ENCODE measurements at regions of chr19 and their contacts with region 1.

Region 1: GRCh38 chr19:53254411-53255341 is at the start of gene ZNF677:
- DNase-seq: peak; percentile 89 to 97 (median 94)
- H3K4me3 ChIP-seq: peak within 1 kb of the TSS; percentile 62 to 97 (median 85)
- H3K27ac ChIP-seq: peak within 1 kb of the TSS in 47 of 59 donors; percentile 2 to 88 (median 74)
- H3K27me3 ChIP-seq: peaks cover 0 to 5% (median 0%) of the 10 kb centered on the region in 45 donors
- CTCF ChIP-seq: peak in 4 of 56 donors; percentile 8 to 17 (median 10)
- total RNA-seq, gene ZNF677: 8.9 to 29.8 (median 17.3) TPM

Region 2: GRCh38 chr19:53212703-53213320 is 41.9 kb before region 1 on chr19:
- intact Hi-C with region 1: no loop called
- DNase-seq: no peak
- H3K4me3 ChIP-seq: no peak overlapping the region
- H3K27ac ChIP-seq: no peak overlapping the region
- H3K27me3 ChIP-seq: no peaks in the 10 kb centered on the region
- CTCF ChIP-seq: no peak

Region 3: DNA sequence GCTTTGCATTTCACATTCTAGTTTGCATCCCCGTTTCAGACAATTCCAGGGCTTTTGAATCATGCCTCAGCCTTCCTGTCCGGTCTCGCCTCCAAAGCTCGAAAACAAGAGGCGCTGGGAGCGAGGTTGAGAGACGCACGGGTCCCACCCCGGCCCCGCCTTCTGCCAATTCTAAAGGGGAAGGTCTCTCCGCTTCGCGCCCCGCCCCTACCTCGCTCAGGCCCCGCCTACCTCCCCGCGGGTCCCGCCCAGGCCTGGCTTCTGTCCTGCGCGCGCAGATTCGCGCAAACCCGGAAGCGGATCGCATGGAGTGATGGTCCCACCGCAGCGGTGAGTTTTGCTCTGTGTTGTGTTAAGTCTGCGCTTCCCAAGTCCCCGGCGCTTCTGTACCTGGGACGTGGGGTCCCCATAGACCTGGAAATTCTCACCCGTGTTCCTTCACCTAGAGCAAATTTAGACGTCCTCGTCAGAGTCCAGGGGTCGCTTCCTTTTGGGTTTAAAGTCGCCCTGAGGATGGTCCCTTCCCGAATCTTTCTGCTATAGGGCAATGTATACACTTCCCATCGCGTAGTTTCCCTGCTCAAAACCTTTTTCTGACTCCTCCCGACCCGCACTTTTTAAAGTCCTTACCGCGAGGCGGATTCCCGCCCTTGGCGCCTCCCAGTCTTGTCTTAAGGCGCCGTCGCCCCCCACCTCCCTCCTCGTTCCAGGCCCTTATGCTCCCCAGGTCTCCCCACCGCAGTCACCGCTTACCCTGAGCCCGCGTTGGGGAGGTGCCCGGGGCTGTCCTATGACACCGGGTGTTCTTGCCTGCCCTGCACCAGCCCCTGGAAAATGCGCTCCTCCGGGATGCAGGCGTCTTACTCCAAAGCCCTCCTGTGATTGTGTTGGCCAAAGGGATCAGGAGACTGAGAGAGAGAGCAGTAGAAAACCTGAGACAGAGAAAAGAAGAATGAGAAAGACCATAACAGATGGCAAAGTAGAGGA is 79.1 kb after region 1 on chr19 and contains the start of gene ZNF845:
- intact Hi-C with region 1: loop called in 1 of 2 experiments (anchors 5 kb)
- DNase-seq: peak; percentile 83 to 96 (median 91)
- H3K4me3 ChIP-seq: peak within 1 kb of the TSS; percentile 51 to 91 (median 76)
- H3K27ac ChIP-seq: peak within 1 kb of the TSS in 46 of 59 donors; percentile 12 to 80 (median 59)
- H3K27me3 ChIP-seq: peaks cover 0 to 7% (median 0%) of the 10 kb centered on the region in 45 donors
- CTCF ChIP-seq: peak in 8 of 56 donors; percentile 10 to 33 (median 17)
- total RNA-seq, gene ZNF845: 2.6 to 6.5 (median 4.3) TPM